Left colon (tissue), 2 donors: ENCODE measurements at regions of chr17 and their contacts with region 1.

Region 1: GRCh38 chr17:53749178-53749577 is 73.5 kb upstream of the KIF2B start:
- DNase-seq: no peak
- ATAC-seq: no peak

Region 2: DNA sequence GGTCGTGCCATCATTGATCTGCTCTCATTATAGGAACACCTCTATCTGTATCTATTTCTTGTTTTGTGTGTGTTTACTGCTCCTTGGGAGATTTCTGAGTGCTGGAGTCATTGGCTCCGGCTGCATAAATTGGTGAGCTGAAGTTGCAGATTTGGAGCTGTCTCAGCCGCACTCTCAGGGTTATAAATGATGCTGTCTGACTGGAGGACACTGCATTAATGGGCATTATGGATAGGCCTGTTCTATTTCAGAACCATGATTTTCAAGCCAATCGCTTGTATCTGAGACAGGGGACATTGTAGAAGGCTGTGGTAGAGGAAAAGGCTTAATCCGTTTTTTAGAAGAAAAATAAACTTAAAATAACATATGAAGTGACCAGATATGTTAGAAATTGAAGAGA is 52.9 kb before region 1 on chr17:
- intact Hi-C with region 1: loop called in 1 of 2 experiments (anchors 10 kb)
- DNase-seq: no peak
- ATAC-seq: no peak